ENCODE measurements at regions of chr11 and their contacts with region 1.

Region 1: DNA sequence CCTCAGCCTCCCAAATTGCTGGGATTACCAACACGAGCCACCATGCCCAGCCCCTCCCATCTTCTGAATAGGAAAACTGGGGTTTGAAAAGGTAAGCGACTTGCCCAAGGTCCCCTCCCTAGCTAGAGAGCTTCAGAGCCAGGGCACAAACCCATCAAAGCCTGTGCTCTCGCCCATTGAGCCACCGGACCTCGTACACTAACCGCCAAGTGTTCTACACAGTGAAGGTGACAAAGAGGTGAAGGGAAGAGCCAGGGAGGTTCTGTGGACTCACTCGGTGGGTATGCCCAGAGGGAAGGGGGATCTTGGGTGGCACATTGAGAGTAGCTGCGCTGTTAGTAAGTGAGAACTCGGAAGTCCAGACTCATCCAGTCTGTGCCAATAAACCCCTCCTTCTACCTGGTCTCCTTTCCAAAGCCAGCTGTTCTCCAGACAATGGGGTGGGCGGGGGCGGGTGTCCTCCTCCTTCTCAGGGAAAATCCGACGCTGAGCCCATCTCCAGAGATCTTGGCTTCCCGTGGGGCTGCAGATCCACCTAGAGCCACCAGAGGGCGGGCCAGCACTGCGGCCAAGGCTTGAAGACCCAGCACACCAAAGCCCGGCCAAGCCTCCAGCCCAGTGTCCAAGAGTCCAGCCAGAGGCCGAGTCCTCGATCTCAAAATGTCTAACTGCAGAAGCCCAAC is 3.2 kb upstream of the RTN4RL2 start:
- DNase-seq: peak; percentile 94

Region 2: GRCh38 chr11:57426929-57427726 is 30.0 kb before region 1 on chr11 and contains the start of gene SLC43A3:
- intact Hi-C with region 1: loop called (anchors 2 kb)
- DNase-seq: peak; percentile 89
- total RNA-seq, gene SLC43A3: 26.7 TPM

Region 3: GRCh38 chr11:57480409-57481137 is 23.5 kb after region 1 on chr11:
- intact Hi-C with region 1: loop called (anchors 2 kb)
- DNase-seq: no peak

Region 4: GRCh38 chr11:57530596-57531507 is 73.8 kb after region 1 on chr11 and contains the start of gene TIMM10:
- intact Hi-C with region 1: loop called (anchors 2 kb)
- DNase-seq: peak; percentile 98
- total RNA-seq, gene TIMM10: 71.6 TPM

Region 5: DNA sequence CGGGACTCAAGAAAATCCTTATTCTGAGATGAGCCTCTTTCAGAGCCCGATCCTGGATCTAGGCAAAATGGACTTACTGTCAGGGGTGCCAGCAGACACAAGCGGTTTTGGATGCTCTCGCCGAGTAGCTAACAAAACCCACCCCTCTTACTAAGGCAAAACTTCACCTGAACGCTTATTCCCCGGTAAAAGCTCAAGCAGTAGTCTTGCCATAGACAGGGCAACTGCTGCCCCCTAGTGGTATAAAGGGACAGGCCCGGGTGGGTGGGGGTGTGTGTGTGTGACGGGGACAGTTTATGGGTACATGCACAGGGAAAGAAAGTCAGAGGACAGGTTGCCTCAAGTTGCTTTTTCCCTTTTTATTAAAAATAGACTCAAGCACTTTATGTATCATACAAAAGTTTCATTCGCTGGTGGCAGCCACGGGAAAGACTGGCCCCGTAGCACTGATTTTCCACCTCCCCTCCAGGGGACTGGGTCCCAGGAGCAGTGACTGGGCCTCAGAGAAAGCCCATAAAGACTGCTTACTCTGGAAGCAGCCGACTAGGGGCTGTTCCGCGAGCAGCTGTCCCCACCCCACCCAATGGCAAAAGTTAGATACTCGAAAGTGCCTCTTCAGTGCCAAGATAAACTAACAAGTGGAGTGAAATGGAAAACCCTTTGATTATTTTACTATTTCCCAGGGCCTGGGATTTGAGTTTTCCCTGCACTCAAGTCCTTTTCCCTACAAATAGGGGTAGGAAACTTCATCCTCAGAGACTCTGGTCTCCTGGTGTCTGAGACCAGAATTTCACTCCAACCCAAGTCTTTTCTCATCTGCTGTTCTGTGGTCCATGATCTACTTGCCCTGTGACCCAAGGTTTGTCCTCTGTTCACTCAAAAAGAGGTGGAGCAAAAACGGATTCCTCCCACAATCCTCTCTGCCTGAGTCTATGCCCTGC is 187.9 kb after region 1 on chr11:
- intact Hi-C with region 1: loop called (anchors 5 kb)
- DNase-seq: peak; percentile 88

Measured in cardiac septum (tissue), 1 donor.